Right ventricle myocardium superior (tissue), 1 donor: ENCODE measurements at regions of chr2 and their contacts with region 1.

Region 1: GRCh38 chr2:201231781-201232466 is 28.4 kb upstream of the CASP8 start:
- DNase-seq: peak; percentile 86
- ATAC-seq: peak; percentile 88

Region 2: DNA sequence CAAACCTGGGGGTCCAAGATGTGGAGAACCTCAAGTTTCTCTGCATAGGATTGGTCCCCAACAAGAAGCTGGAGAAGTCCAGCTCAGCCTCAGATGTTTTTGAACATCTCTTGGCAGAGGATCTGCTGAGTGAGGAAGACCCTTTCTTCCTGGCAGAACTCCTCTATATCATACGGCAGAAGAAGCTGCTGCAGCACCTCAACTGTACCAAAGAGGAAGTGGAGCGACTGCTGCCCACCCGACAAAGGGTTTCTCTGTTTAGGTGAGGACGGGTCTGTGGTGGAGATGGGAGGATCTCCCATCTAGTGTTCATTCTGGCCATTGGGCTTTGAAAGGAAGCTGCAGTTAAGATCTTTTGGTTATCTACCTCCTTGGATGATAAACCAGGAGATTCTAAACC is 46.1 kb before region 1 on chr2:
- intact Hi-C with region 1: loop called (anchors 5 kb)
- DNase-seq: no peak
- ATAC-seq: no peak

Region 3: DNA sequence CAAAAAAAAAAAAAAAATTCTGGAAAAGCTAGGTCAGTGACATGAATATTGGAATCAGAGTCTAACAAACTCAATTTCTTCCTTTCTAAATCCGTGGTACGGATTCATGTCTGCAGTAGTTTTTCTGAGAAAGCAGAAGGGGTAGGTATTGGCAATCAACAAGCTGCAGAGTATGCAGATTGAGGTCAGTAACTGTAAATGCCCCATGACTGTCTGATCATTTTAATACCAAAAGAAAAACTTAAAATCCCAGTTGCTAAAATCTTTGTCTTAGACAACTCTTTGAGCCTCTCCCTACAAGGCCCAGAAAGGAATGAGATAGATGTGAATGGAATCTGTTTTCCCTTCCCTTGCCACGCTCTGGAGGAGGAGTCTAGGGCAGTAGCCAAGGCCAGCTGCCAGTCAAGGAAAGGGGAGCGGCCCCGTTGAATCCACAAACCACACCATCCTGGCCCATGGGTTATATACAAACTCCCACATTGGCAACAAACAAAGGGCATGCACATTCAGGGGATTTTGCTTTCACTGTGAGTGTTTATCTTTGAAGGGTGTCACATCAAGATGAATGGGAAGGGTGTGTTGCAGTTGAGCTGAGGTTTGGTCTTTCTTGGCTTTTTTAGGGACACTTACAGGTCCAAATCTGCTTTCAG is 22.3 kb after region 1 on chr2:
- intact Hi-C with region 1: no loop called
- DNase-seq: no peak
- ATAC-seq: no peak

Region 4: GRCh38 chr2:201327678-201328077 is 95.8 kb after region 1 on chr2:
- intact Hi-C with region 1: no loop called
- DNase-seq: no peak
- ATAC-seq: no peak

Region 5: GRCh38 chr2:201344663-201345366 is 112.9 kb after region 1 on chr2:
- intact Hi-C with region 1: no loop called
- DNase-seq: no peak
- ATAC-seq: no peak

Region 6: DNA sequence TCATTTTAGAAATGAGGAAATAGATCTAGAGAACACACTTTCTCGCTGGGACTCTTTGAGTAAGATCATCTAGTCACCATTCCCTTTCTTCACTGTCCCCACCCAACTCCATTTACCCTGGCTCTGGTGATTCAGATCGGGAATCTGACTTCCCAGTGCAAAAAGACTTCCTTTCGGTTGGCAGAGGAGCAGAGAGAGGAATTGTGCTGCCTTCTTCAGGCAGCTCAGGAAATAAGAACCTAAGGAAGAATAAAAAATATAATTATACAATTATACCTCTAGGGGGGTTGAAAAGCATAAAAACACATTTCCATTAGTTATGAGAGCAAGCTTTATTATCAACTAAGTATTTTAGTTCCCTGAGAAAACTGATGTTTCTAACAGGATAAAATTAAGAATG is 475.8 kb after region 1 on chr2:
- intact Hi-C with region 1: no loop called
- DNase-seq: no peak
- ATAC-seq: no peak